SK-N-SH (cell line): ENCODE measurements at regions of chr11 and their contacts with region 1.

Region 1: GRCh38 chr11:47152953-47153950 is 23.4 kb downstream of the ARFGAP2 start:
- DNase-seq: peak; percentile 89
- H3K4me3 ChIP-seq: peak overlapping the region in 1 of 2 experiments; percentile 39; a peak in 1 of 4 replicates
- H3K27ac ChIP-seq: peak overlapping the region; percentile 49 to 66
- H3K4me1 ChIP-seq: peaks cover 20 to 22% of the 10 kb centered on the region in 2 experiments; a peak in 2 of 4 replicates
- H3K27me3 ChIP-seq: no peaks in the 10 kb centered on the region
- CTCF ChIP-seq: peak; percentile 98
- EP300 ChIP-seq: no peak
- RAD21 ChIP-seq: peak; percentile 99

Region 2: GRCh38 chr11:46856605-46857343 is 296.5 kb before region 1 on chr11:
- CTCF ChIA-PET with region 1: interaction called, 10 read pairs
- POLR2A ChIA-PET with region 1: no interaction called
- DNase-seq: no peak
- H3K4me3 ChIP-seq: no peak overlapping the region
- H3K27ac ChIP-seq: no peak overlapping the region
- H3K4me1 ChIP-seq: no peaks in the 10 kb centered on the region
- H3K27me3 ChIP-seq: no peaks in the 10 kb centered on the region
- CTCF ChIP-seq: no peak
- EP300 ChIP-seq: no peak
- RAD21 ChIP-seq: no peak

Region 3: DNA sequence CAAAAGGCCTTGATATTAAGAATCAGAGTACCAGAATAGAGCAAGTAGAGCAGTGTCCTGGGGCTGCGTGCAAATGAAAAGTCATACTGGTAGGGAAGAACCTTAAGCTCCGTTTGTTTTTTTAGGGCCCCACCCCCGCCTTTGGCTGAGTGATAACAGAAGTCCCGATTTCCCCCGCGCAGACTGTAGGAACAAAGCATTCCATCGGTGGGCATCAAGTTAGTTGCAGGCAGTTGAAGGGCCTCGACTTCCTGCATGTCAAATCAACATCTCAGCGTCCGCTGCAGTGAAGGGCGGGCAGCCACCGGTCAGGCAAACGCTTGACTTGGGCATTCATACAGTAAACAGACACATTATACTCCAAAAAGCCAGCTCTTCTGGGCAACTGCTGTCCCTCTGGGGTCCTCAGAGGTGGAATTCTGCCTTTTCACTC is 246.6 kb before region 1 on chr11:
- CTCF ChIA-PET with region 1: interaction called, 170 read pairs
- POLR2A ChIA-PET with region 1: no interaction called
- DNase-seq: no peak
- H3K4me3 ChIP-seq: no peak overlapping the region
- H3K27ac ChIP-seq: no peak overlapping the region
- H3K4me1 ChIP-seq: no peaks in the 10 kb centered on the region; a peak in 2 of 4 replicates
- H3K27me3 ChIP-seq: no peaks in the 10 kb centered on the region
- CTCF ChIP-seq: no peak
- EP300 ChIP-seq: no peak
- RAD21 ChIP-seq: no peak

Region 4: GRCh38 chr11:46936138-46937110 is 216.8 kb before region 1 on chr11 and contains the start of gene CSTPP1:
- CTCF ChIA-PET with region 1: interaction called, 27 read pairs
- POLR2A ChIA-PET with region 1: interaction called, 3 read pairs
- DNase-seq: peak; percentile 95
- H3K4me3 ChIP-seq: peak within 1 kb of the TSS; percentile 55 to 73
- H3K27ac ChIP-seq: peak within 1 kb of the TSS; percentile 72 to 81
- H3K4me1 ChIP-seq: peaks cover 0 to 5% of the 10 kb centered on the region in 2 experiments; a peak in 2 of 4 replicates
- H3K27me3 ChIP-seq: no peaks in the 10 kb centered on the region
- CTCF ChIP-seq: no peak
- EP300 ChIP-seq: no peak
- RAD21 ChIP-seq: 0 out of 2 replicates have a peak, but pooled peaks have one; percentile 19
- polyA plus RNA-seq, gene CSTPP1: 37.2 and 85.7 TPM in 2 replicates

Region 5: DNA sequence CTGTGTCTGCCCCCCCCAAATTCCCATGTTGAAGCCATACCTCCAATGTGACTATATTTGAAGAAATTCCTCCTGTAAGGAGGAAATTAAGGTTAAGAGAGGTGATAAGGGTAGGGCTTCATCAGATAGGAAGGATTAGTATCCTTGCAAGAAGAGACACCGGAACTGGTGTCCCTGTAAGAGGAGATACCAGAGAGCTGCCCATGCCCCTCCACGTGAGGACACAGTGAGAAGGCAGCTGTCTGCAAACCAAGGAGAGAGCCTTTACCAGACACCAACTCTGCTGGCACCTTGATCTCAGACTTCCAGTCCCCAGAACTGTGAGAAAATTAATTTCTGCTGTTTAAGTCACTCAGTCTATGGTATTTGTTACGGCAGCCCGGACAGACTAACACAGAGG is 85.9 kb before region 1 on chr11:
- CTCF ChIA-PET with region 1: interaction called, 15 read pairs
- POLR2A ChIA-PET with region 1: no interaction called
- DNase-seq: no peak
- H3K4me3 ChIP-seq: no peak overlapping the region
- H3K27ac ChIP-seq: peak overlapping the region in 1 of 2 experiments; percentile 31; a peak in 1 of 4 replicates
- H3K4me1 ChIP-seq: peaks cover 3 to 12% of the 10 kb centered on the region in 2 experiments; a peak in 3 of 4 replicates
- H3K27me3 ChIP-seq: no peaks in the 10 kb centered on the region
- CTCF ChIP-seq: no peak
- EP300 ChIP-seq: no peak
- RAD21 ChIP-seq: no peak

Region 6: GRCh38 chr11:47132490-47132889 is 20.8 kb before region 1 on chr11:
- CTCF ChIA-PET with region 1: interaction called, 25 read pairs
- POLR2A ChIA-PET with region 1: no interaction called
- DNase-seq: no peak
- H3K4me3 ChIP-seq: no peak overlapping the region
- H3K27ac ChIP-seq: no peak overlapping the region
- H3K4me1 ChIP-seq: peaks cover 0 to 3% of the 10 kb centered on the region in 2 experiments; a peak in 1 of 4 replicates
- H3K27me3 ChIP-seq: no peaks in the 10 kb centered on the region
- CTCF ChIP-seq: no peak
- EP300 ChIP-seq: no peak
- RAD21 ChIP-seq: no peak